ENCODE measurements at regions of chr4 and their contacts with region 1.

Region 1: DNA sequence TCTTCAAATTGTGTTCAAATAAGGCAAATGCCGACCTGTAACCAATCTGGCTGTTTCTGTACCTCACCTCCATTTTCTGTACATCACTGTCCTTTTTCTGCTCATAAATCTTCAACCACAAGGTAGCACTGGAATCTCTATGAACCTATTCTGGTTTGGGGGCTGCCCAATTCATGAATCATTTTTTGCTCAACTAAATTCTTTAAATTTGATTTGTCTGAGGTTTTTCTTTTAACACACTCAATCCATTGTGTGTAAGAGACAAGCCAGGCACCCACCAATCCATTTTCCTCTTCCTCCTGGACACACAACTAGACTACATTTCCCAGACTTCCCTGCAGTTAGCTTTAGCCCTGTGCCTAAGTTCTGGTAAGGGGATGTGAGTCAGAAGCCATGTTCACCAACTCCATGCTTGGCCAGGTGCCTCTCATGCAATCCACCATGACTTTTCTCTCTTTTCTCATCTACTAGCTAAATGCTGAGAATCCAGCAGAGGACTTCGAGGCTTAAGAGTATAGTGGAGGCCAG is 193.2 kb upstream of the KLF3 start:
- DNase-seq: no peak
- H3K4me3 ChIP-seq: no peak overlapping the region
- H3K27ac ChIP-seq: no peak overlapping the region
- H3K4me1 ChIP-seq: no peaks in the 10 kb centered on the region
- H3K27me3 ChIP-seq: peaks cover 2 to 6% of the 10 kb centered on the region in 2 experiments
- CTCF ChIP-seq: no peak
- POLR2A ChIP-seq: no peak

Region 2: GRCh38 chr4:38062088-38062893 is 408.5 kb before region 1 on chr4:
- CTCF ChIA-PET with region 1: no interaction called
- POLR2A ChIA-PET with region 1: no interaction called
- dilution Hi-C with region 1: no loop called
- intact Hi-C with region 1: no loop called
- DNase-seq: peak; percentile 82
- H3K4me3 ChIP-seq: peak overlapping the region in 2 of 3 experiments; percentile 8 to 64
- H3K27ac ChIP-seq: no peak overlapping the region
- H3K4me1 ChIP-seq: peaks cover 2% of the 10 kb centered on the region
- H3K27me3 ChIP-seq: no peaks in the 10 kb centered on the region
- CTCF ChIP-seq: peak; percentile 77 to 78
- POLR2A ChIP-seq: no peak

Region 3: GRCh38 chr4:38411092-38411491 is 59.7 kb before region 1 on chr4:
- CTCF ChIA-PET with region 1: no interaction called
- POLR2A ChIA-PET with region 1: no interaction called
- dilution Hi-C with region 1: no loop called
- intact Hi-C with region 1: loop called (anchors 10 kb)
- DNase-seq: no peak
- H3K4me3 ChIP-seq: no peak overlapping the region
- H3K27ac ChIP-seq: no peak overlapping the region
- H3K4me1 ChIP-seq: no peaks in the 10 kb centered on the region
- H3K27me3 ChIP-seq: peaks cover 8 to 12% of the 10 kb centered on the region in 2 experiments
- CTCF ChIP-seq: no peak
- POLR2A ChIP-seq: no peak

Region 4: GRCh38 chr4:38452009-38452408 is 18.8 kb before region 1 on chr4:
- CTCF ChIA-PET with region 1: no interaction called
- POLR2A ChIA-PET with region 1: no interaction called
- dilution Hi-C with region 1: no loop called
- intact Hi-C with region 1: no loop called
- DNase-seq: no peak
- H3K4me3 ChIP-seq: no peak overlapping the region
- H3K27ac ChIP-seq: no peak overlapping the region
- H3K4me1 ChIP-seq: no peaks in the 10 kb centered on the region
- H3K27me3 ChIP-seq: peaks cover 2 to 15% of the 10 kb centered on the region in 2 experiments
- CTCF ChIP-seq: no peak
- POLR2A ChIP-seq: no peak

Region 5: DNA sequence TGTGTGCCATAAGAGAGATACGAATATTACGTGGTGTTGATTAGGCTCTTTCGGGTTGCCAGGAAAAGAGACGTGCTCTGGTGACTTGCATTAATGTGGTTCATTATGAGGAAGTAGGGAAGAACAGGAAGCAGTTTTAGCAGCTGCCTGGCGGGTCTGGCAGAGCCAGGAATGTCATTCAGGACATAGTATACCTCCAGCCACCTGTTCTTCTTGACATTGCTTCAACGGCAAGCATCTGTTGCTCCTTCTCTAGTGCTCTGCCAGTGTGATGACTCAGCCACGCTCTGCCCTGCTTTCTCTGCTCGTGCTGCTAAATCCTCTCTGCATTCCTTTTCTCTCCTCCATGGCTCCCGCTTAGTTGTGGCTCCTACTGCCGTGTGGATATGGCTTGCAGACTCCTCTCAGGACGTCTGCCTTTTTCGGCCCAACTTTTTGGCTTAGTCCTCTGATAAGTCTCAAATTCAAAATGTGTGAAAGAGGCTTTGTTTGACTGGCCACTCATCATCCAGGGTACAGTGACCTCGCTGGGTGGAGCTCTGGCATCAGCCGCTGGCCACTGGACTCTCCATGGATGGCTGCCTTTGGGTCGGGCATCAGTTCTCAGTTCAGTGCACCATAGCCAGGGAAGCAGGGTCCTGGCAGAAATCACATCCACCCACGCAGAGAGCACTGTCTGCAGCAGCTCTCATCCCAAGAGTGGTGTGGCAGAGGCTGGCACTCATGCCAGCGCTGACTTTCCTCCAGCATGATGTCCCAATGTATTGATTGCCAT is 103.9 kb after region 1 on chr4:
- CTCF ChIA-PET with region 1: no interaction called
- POLR2A ChIA-PET with region 1: no interaction called
- dilution Hi-C with region 1: no loop called
- intact Hi-C with region 1: no loop called
- DNase-seq: no peak
- H3K4me3 ChIP-seq: no peak overlapping the region
- H3K27ac ChIP-seq: no peak overlapping the region
- H3K4me1 ChIP-seq: no peaks in the 10 kb centered on the region
- H3K27me3 ChIP-seq: peaks cover 0 to 2% of the 10 kb centered on the region in 2 experiments
- CTCF ChIP-seq: no peak
- POLR2A ChIP-seq: no peak

Region 6: DNA sequence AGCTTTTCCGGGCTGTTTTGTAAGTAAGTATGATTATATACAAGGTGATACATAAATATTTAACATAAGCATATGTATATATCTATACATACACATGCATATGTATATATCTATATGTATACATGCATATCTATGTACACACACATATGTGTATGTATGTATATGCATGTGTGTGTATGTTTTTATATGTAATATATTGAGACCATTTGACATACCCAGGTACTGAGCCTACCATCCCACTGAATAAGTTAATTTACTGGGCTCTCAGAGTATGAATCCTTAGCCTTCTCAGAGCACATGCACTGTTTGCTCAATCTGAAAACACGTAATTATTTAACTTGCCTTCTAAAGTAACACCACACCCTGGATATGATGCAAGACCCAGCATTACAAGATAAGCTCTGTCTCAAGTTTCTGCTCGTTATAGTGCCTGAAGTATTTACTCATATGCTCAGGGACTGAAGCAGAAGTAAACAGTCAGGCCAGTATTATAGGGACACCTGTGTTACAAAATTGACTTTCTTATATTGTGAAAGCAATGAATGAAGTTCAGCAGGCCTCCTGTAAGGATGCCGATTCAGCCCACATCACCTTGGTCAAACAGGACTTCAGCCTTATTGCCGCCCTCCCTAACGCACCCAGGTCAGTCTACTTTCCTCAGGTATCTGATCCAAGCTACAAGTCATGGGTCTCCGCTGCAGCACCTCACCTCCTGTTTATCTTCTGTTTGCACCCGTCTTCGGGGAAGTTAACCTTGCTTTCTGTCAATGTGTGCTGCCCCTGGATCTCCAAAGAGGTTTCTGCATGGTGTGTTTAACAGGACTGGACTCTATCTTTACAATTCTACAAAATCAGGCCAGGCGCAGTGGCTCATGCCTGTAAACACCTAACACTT is 150.2 kb after region 1 on chr4:
- CTCF ChIA-PET with region 1: no interaction called
- POLR2A ChIA-PET with region 1: no interaction called
- dilution Hi-C with region 1: no loop called
- intact Hi-C with region 1: no loop called
- DNase-seq: no peak
- H3K4me3 ChIP-seq: no peak overlapping the region
- H3K27ac ChIP-seq: no peak overlapping the region
- H3K4me1 ChIP-seq: no peaks in the 10 kb centered on the region
- H3K27me3 ChIP-seq: peaks cover 0 to 2% of the 10 kb centered on the region in 2 experiments
- CTCF ChIP-seq: no peak
- POLR2A ChIP-seq: no peak